ENCODE measurements at regions of chr18 and their contacts with region 1.

Region 1: GRCh38 chr18:74495581-74496507 is at the start of gene CNDP2:
- DNase-seq: peak; percentile 100
- H3K4me3 ChIP-seq: peak within 1 kb of the TSS; percentile 86 to 94
- H3K27ac ChIP-seq: peak within 1 kb of the TSS; percentile 93 to 96
- H3K4me1 ChIP-seq: no peaks in the 10 kb centered on the region
- H3K27me3 ChIP-seq: no peaks in the 10 kb centered on the region
- CTCF ChIP-seq: peak in 1 of 4 experiments; percentile 24
- POLR2A ChIP-seq: peak; percentile 94
- total RNA-seq, gene CNDP2: 144 to 294 TPM

Region 2: DNA sequence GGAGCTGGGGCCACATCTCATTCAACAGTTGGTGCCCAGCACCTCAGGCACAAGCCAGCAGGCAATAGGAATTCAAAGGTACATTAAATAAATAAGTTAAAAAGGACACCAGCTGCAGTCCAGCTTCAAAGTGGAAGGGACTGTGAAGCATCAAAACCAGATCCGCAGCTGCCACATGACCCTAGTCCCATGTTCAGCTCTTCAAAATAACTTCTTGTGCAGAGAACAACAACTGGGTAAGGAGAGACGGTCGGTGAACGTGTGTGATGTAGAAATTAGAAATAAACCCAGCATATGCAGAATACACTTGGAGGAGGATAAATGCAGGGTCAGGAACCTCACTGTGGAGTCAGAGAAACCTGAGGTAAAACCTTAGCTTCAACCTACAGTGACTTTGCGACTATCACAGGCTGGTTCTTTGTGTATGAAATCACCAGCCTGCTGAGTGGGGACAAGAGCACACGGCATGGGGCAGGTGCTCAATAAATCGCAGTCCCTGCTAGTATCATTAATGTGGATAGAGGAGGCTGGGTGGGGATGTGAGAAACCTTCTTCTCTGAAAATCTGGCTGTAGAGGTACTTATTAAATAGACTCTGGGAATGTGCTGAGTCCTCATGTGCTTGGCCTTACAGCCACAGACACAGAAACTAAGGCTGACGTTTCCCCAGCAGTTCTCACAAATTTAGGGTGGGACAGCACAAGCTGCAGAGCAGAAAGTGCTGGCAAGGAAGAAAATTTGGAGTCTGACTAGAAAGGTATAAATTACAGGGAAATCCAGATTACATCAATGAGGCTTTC is 369.0 kb before region 1 on chr18:
- intact Hi-C with region 1: no loop called
- DNase-seq: no peak
- H3K4me3 ChIP-seq: no peak overlapping the region
- H3K27ac ChIP-seq: no peak overlapping the region
- H3K4me1 ChIP-seq: no peaks in the 10 kb centered on the region
- H3K27me3 ChIP-seq: no peaks in the 10 kb centered on the region
- CTCF ChIP-seq: no peak
- POLR2A ChIP-seq: no peak

Region 3: GRCh38 chr18:74147779-74148542 is 347.9 kb before region 1 on chr18 and contains the starts of genes FBXO15 and TIMM21:
- intact Hi-C with region 1: loop called (anchors 5 kb)
- DNase-seq: peak; percentile 91
- H3K4me3 ChIP-seq: peak within 1 kb of the TSS; percentile 56
- H3K27ac ChIP-seq: peak within 1 kb of the TSS; percentile 83 to 88
- H3K4me1 ChIP-seq: peaks cover 2% of the 10 kb centered on the region
- H3K27me3 ChIP-seq: no peaks in the 10 kb centered on the region
- CTCF ChIP-seq: peak in 2 of 4 experiments; percentile 12 to 31
- POLR2A ChIP-seq: peak; percentile 33
- total RNA-seq, gene FBXO15: 4.2 to 7.8 TPM
- total RNA-seq, gene TIMM21: 27.6 to 33.1 TPM

Region 4: DNA sequence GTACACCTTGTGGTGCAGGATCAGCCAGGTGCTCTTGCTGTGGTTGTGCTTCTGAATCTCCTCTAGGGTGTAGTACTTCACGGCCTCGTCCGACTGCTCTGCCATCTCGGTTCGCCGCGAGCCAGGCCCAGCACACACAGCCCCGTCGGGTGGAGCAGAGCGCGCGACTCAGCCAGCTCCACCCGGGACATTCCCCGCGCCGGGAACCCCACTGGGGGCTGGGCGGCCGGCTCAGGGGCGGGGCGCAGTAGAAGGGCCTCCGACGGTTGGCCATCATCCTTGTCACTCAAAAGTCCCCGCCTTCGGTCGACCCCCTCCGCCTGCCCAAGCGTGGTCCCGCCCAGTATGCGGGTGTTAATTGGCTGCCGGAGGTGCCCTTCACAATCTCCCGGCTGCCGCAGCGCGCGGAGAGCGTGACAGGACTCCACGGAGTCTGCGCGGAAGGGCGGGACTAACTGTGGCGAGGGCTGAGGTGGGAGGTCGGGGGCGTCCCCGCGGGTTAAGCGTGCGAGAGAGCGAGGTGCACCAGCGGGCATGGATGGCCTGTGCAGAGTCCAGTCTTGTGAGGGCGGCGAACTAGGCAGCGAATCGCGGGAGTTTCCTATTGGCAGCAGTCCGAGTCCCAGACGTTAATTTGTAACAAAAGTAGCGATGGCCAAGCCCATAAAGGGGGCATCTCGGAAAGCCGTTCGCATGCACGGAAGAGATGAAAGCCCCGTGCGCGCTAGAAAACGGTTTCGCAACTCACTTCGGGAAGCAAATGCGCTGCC is 203.9 kb before region 1 on chr18 and contains the start of gene CYB5A:
- intact Hi-C with region 1: loop called (anchors 5 kb)
- DNase-seq: peak; percentile 98
- H3K4me3 ChIP-seq: peak within 1 kb of the TSS; percentile 75 to 92
- H3K27ac ChIP-seq: peak within 1 kb of the TSS; percentile 67
- H3K4me1 ChIP-seq: no peaks in the 10 kb centered on the region
- H3K27me3 ChIP-seq: no peaks in the 10 kb centered on the region
- CTCF ChIP-seq: no peak
- POLR2A ChIP-seq: peak; percentile 38
- total RNA-seq, gene CYB5A: 76.6 to 144 TPM

Region 5: GRCh38 chr18:74551936-74552555 is 56.2 kb after region 1 on chr18:
- intact Hi-C with region 1: loop called (anchors 10 kb)
- DNase-seq: peak; percentile 86
- H3K4me3 ChIP-seq: no peak overlapping the region
- H3K27ac ChIP-seq: no peak overlapping the region
- H3K4me1 ChIP-seq: no peaks in the 10 kb centered on the region
- H3K27me3 ChIP-seq: no peaks in the 10 kb centered on the region
- CTCF ChIP-seq: peak; percentile 44 to 84 (median 81)
- POLR2A ChIP-seq: no peak

Region 6: DNA sequence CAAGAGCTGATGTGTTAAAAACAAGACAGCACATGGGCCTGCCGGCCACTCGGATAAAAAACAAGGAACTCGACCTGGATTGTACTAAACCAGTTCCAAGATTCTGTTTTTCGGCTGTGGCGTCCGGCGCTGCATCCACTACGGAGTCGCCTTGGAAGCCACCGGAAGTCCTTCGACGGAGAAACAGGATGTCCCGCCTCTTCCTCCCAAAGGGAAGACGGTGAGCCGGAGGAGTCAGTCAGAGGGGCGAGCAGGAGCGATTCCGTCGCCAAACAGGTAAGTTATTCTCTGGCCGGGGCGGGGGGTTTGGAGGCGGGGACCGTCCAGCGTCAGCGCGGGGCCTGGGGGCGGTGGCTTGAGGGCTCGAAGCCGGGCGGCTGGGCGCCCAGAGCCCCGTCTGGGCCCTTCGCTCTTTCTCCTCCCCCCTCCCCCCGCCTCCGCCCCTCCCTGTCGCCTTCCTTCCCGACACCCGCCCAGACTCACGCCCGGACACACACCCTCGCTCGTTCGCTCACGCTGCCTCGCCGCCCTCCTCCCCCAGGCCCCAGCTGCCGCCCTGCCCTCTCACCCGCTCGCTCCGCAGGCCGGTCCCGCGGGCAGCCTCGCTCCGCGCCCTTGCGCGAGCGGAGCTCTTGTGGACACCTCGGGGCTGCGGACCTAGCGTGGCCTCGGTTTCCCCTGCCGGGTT is 102.0 kb after region 1 on chr18 and contains the start of gene ZNF407:
- intact Hi-C with region 1: loop called (anchors 5 kb)
- DNase-seq: peak; percentile 83
- H3K4me3 ChIP-seq: peak within 1 kb of the TSS; percentile 92 to 99
- H3K27ac ChIP-seq: peak within 1 kb of the TSS; percentile 98 to 99
- H3K4me1 ChIP-seq: no peaks in the 10 kb centered on the region
- H3K27me3 ChIP-seq: no peaks in the 10 kb centered on the region
- CTCF ChIP-seq: no peak
- POLR2A ChIP-seq: no peak
- total RNA-seq, gene ZNF407: 11.7 to 22.2 TPM

Region 7: GRCh38 chr18:74831571-74832250 is 335.9 kb after region 1 on chr18:
- intact Hi-C with region 1: no loop called
- DNase-seq: no peak
- H3K4me3 ChIP-seq: no peak overlapping the region
- H3K27ac ChIP-seq: no peak overlapping the region
- H3K4me1 ChIP-seq: no peaks in the 10 kb centered on the region
- H3K27me3 ChIP-seq: no peaks in the 10 kb centered on the region
- CTCF ChIP-seq: no peak
- POLR2A ChIP-seq: no peak

Measured in prostate gland (tissue), 2 donors.